ENCODE measurements at regions of chr9 and their contacts with region 1.

Region 1: DNA sequence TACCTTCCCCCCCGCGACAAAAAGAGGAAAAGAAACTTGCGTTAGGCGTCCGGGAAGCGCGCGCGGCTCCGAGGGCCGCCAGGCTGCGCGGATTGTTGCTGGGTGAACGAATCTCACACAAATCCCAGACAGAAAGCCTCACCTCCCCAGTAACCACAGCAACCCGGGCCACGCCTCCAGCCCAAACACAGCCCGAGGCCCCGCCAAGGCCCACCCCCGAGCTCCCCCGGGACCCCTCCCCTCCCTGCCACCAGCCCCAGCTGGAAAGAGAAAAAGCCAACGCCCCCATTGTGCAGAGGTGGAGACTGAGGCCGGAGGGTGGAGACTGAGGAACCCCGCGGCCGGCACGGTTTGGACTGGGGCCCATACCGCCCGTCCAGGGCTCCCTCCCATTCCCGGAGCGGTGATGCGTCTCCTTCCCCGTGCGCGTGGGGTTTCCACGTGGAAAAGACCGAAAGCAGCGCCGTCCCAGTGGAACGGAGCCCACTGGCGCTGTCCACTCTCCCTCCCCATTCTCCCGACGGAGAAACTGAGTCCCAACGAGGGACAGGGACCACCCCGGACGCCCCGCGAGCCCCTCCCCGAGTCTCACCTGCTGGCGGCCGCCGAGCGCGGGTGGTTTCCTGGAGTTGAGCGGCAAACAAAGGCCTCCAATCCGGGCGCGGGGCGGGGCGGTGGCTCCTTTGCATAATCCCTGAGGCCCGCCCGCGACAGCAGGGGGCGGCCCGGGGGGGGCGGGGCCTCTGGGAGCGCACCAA is 10.2 kb upstream of the AKNA start:
- DNase-seq: peak; percentile 97
- H3K4me3 ChIP-seq: peak overlapping the region; percentile 76
- H3K27ac ChIP-seq: peak overlapping the region; percentile 97
- H3K4me1 ChIP-seq: peaks cover 56% of the 10 kb centered on the region
- CTCF ChIP-seq: no peak

Region 2: GRCh38 chr9:114366334-114367128 is 31.5 kb before region 1 on chr9:
- CTCF ChIA-PET with region 1: interaction called, 4 read pairs
- POLR2A ChIA-PET with region 1: interaction called, 14 read pairs
- intact Hi-C with region 1: no loop called
- DNase-seq: peak; percentile 68
- H3K4me3 ChIP-seq: peak overlapping the region; percentile 53
- H3K27ac ChIP-seq: peak overlapping the region; percentile 99
- H3K4me1 ChIP-seq: peaks cover 88% of the 10 kb centered on the region
- CTCF ChIP-seq: no peak

Region 3: GRCh38 chr9:114372921-114373448 is 25.0 kb before region 1 on chr9:
- CTCF ChIA-PET with region 1: no interaction called
- POLR2A ChIA-PET with region 1: interaction called, 14 read pairs
- intact Hi-C with region 1: loop called (anchors 1 kb)
- DNase-seq: peak; percentile 99
- H3K4me3 ChIP-seq: peak overlapping the region; percentile 56
- H3K27ac ChIP-seq: peak overlapping the region; percentile 99
- H3K4me1 ChIP-seq: peaks cover 94% of the 10 kb centered on the region
- CTCF ChIP-seq: no peak

Region 4: GRCh38 chr9:114493521-114494184 is 95.6 kb after region 1 on chr9:
- CTCF ChIA-PET with region 1: no interaction called
- POLR2A ChIA-PET with region 1: no interaction called
- intact Hi-C with region 1: no loop called
- DNase-seq: no peak
- H3K4me3 ChIP-seq: no peak overlapping the region
- H3K27ac ChIP-seq: no peak overlapping the region
- H3K4me1 ChIP-seq: peaks cover 8% of the 10 kb centered on the region
- CTCF ChIP-seq: no peak

Region 5: GRCh38 chr9:114611516-114612271 is 213.7 kb after region 1 on chr9:
- CTCF ChIA-PET with region 1: no interaction called
- POLR2A ChIA-PET with region 1: interaction called, 7 read pairs
- intact Hi-C with region 1: loop called (anchors 5 kb)
- DNase-seq: peak; percentile 62
- H3K4me3 ChIP-seq: peak overlapping the region; percentile 95
- H3K27ac ChIP-seq: peak overlapping the region; percentile 86
- H3K4me1 ChIP-seq: peaks cover 72% of the 10 kb centered on the region
- CTCF ChIP-seq: no peak

Measured in OCI-LY7 (cell line).